ENCODE measurements at regions of chr5 and their contacts with region 1.

Region 1: DNA sequence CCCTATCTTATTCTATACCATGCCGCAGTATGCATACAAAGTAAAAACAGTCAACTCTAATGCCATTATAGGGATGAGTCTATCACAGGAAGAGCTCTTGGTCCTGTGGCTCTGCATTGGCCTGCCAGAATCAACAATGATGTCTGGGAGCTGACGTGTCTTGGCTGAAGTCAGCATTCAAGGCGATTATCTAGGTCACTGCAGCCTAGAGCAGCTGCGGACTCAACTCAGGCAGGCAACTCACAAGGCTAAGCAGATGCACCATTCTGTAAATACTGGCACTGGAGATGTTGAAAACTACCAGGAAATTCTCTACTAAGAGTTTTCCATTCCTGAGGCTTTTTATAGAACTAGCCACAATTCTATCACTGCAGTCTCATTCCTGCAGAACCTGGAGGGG is 13.3 kb downstream of the SPATA9 start:
- H3K4me3 ChIP-seq: no peak overlapping the region
- H3K27ac ChIP-seq: no peak overlapping the region
- H3K4me1 ChIP-seq: peaks cover 7% of the 10 kb centered on the region; the same call in 1 of the 2 replicates
- CTCF ChIP-seq: no peak

Region 2: GRCh38 chr5:95646554-95647431 is 22.7 kb before region 1 on chr5 and contains the start of gene RFESD:
- CTCF ChIA-PET with region 1: interaction called, 44 read pairs
- POLR2A ChIA-PET with region 1: interaction called, 6 read pairs
- H3K4me3 ChIP-seq: peak within 1 kb of the TSS; percentile 40
- H3K27ac ChIP-seq: peak within 1 kb of the TSS; percentile 79
- H3K4me1 ChIP-seq: peaks cover 5% of the 10 kb centered on the region; the same call in 1 of the 2 replicates
- CTCF ChIP-seq: 0 out of 2 replicates have a peak, but pooled peaks have one; percentile 37

Measured in HEK293 (cell line).